Heart left ventricle (tissue), 16 donors: ENCODE measurements at regions of chr5 and their contacts with region 1.

Region 1: GRCh38 chr5:77396017-77396416 is 96.1 kb downstream of the WDR41 start:
- DNase-seq: no peak
- ATAC-seq: no peak
- H3K4me3 ChIP-seq: no peak overlapping the region
- H3K27ac ChIP-seq: no peak overlapping the region
- H3K4me1 ChIP-seq: no peaks in the 10 kb centered on the region
- H3K27me3 ChIP-seq: no peaks in the 10 kb centered on the region
- CTCF ChIP-seq: no peak
- POLR2A ChIP-seq: no peak

Region 2: GRCh38 chr5:77102549-77102948 is 293.5 kb before region 1 on chr5:
- intact Hi-C with region 1: no loop called
- DNase-seq: no peak
- ATAC-seq: no peak
- H3K4me3 ChIP-seq: no peak overlapping the region
- H3K27ac ChIP-seq: no peak overlapping the region
- H3K4me1 ChIP-seq: no peaks in the 10 kb centered on the region
- H3K27me3 ChIP-seq: no peaks in the 10 kb centered on the region
- CTCF ChIP-seq: no peak
- POLR2A ChIP-seq: no peak

Region 3: GRCh38 chr5:77200663-77201062 is 195.4 kb before region 1 on chr5:
- intact Hi-C with region 1: no loop called
- DNase-seq: no peak
- ATAC-seq: peak; percentile 34 to 92 (median 64)
- H3K4me3 ChIP-seq: no peak overlapping the region
- H3K27ac ChIP-seq: no peak overlapping the region
- H3K4me1 ChIP-seq: peaks cover 0 to 10% (median 0%) of the 10 kb centered on the region in 12 donors
- H3K27me3 ChIP-seq: no peaks in the 10 kb centered on the region
- CTCF ChIP-seq: no peak
- POLR2A ChIP-seq: no peak

Region 4: GRCh38 chr5:77259476-77259875 is 136.5 kb before region 1 on chr5:
- intact Hi-C with region 1: loop called in 1 of 10 experiments (anchors 5 kb)
- DNase-seq: no peak
- ATAC-seq: no peak
- H3K4me3 ChIP-seq: no peak overlapping the region
- H3K27ac ChIP-seq: no peak overlapping the region
- H3K4me1 ChIP-seq: no peaks in the 10 kb centered on the region
- H3K27me3 ChIP-seq: no peaks in the 10 kb centered on the region
- CTCF ChIP-seq: no peak
- POLR2A ChIP-seq: no peak